ENCODE measurements at regions of chr6 and their contacts with region 1.

Region 1: GRCh38 chr6:34392497-34393190 is at the start of gene NUDT3:
- DNase-seq: peak in 1 of 2 donors; percentile 94
- H3K4me3 ChIP-seq: peak within 1 kb of the TSS; percentile 78 to 90
- H3K27ac ChIP-seq: peak within 1 kb of the TSS; percentile 92
- H3K4me1 ChIP-seq: peaks cover 26% of the 10 kb centered on the region
- H3K27me3 ChIP-seq: no peaks in the 10 kb centered on the region
- CTCF ChIP-seq: peak; percentile 52 to 86 (median 59)
- POLR2A ChIP-seq: peak in 1 of 2 donors; percentile 75
- total RNA-seq, gene NUDT3: 27.0 TPM

Region 2: GRCh38 chr6:34248727-34249551 is 143.7 kb before region 1 on chr6 and contains the start of gene SMIM29:
- intact Hi-C with region 1: loop called (anchors 5 kb)
- DNase-seq: peak in 1 of 2 donors; percentile 97
- H3K4me3 ChIP-seq: peak within 1 kb of the TSS; percentile 75 to 96
- H3K27ac ChIP-seq: peak within 1 kb of the TSS; percentile 99
- H3K4me1 ChIP-seq: peaks cover 43% of the 10 kb centered on the region
- H3K27me3 ChIP-seq: no peaks in the 10 kb centered on the region
- CTCF ChIP-seq: peak; percentile 79 to 97 (median 94)
- POLR2A ChIP-seq: peak in 1 of 2 donors; percentile 79
- total RNA-seq, gene SMIM29: 22.3 TPM

Measured in vagina (tissue), 2 donors.